Activated CD8-positive, alpha-beta T cell treated with anti-CD3 and anti-CD28 coated beads, Interleukin-2, amount 10 ng/mL, durations not matched to agents 7 days and 5 days (primary cell): ENCODE measurements at regions of chr4 and their contacts with region 1.

Region 1: GRCh38 chr4:147096667-147097604 is 151.3 kb upstream of the TTC29 start:
- DNase-seq: no peak
- ATAC-seq: no peak
- H3K4me3 Mint-ChIP-seq: no peak overlapping the region
- H3K27ac Mint-ChIP-seq: no peak overlapping the region
- H3K4me1 Mint-ChIP-seq: no peaks in the 10 kb centered on the region
- H3K27me3 Mint-ChIP-seq: peaks cover 10% of the 10 kb centered on the region

Region 2: GRCh38 chr4:146342600-146343192 is 754.2 kb before region 1 on chr4:
- CTCF ChIA-PET with region 1: interaction called, 13 read pairs
- POLR2A ChIA-PET with region 1: no interaction called
- DNase-seq: peak; percentile 42
- ATAC-seq: no peak
- H3K4me3 Mint-ChIP-seq: no peak overlapping the region
- H3K27ac Mint-ChIP-seq: no peak overlapping the region
- H3K4me1 Mint-ChIP-seq: peaks cover 11% of the 10 kb centered on the region
- H3K27me3 Mint-ChIP-seq: no peaks in the 10 kb centered on the region

Region 3: GRCh38 chr4:147006229-147006628 is 90.7 kb before region 1 on chr4:
- CTCF ChIA-PET with region 1: interaction called, 10 read pairs
- POLR2A ChIA-PET with region 1: no interaction called
- DNase-seq: no peak
- ATAC-seq: no peak
- H3K4me3 Mint-ChIP-seq: no peak overlapping the region
- H3K27ac Mint-ChIP-seq: no peak overlapping the region
- H3K4me1 Mint-ChIP-seq: no peaks in the 10 kb centered on the region
- H3K27me3 Mint-ChIP-seq: peaks cover 4% of the 10 kb centered on the region

Region 4: GRCh38 chr4:147011411-147011810 is 85.5 kb before region 1 on chr4:
- CTCF ChIA-PET with region 1: interaction called, 124 read pairs
- POLR2A ChIA-PET with region 1: no interaction called
- DNase-seq: no peak
- ATAC-seq: no peak
- H3K4me3 Mint-ChIP-seq: no peak overlapping the region
- H3K27ac Mint-ChIP-seq: no peak overlapping the region
- H3K4me1 Mint-ChIP-seq: no peaks in the 10 kb centered on the region
- H3K27me3 Mint-ChIP-seq: peaks cover 12% of the 10 kb centered on the region

Region 5: GRCh38 chr4:147019061-147019460 is 77.9 kb before region 1 on chr4:
- CTCF ChIA-PET with region 1: interaction called, 124 read pairs
- POLR2A ChIA-PET with region 1: no interaction called
- DNase-seq: peak; percentile 56
- ATAC-seq: peak; percentile 58
- H3K4me3 Mint-ChIP-seq: no peak overlapping the region
- H3K27ac Mint-ChIP-seq: no peak overlapping the region
- H3K4me1 Mint-ChIP-seq: no peaks in the 10 kb centered on the region
- H3K27me3 Mint-ChIP-seq: peaks cover 4% of the 10 kb centered on the region